ENCODE measurements at regions of chr17 and their contacts with region 1.

Region 1: DNA sequence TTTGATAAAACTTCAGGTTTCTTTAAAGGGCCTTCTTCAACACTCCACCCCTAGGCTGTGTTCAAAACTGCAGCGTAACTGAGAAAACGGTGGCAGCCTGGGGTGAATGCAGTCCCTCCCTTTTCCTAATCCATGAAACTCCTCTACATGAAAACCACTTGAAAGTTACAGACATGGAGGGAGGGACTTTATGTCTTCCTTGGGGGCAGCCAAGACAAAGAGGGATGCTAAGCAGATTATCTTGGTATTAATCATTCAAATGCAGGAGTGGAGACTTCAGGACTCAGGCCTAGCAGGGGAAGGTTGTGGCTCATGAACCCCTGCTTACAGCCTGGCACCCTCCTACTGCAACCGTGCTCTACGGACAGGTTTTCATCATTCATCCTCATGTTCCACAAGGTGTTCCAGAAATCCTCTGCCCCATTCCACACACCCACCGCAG is 46.8 kb downstream of the RNF112 start:
- DNase-seq: no peak
- ATAC-seq: no peak
- H3K4me3 ChIP-seq: no peak overlapping the region
- H3K27ac ChIP-seq: no peak overlapping the region
- H3K4me1 ChIP-seq: no peaks in the 10 kb centered on the region
- H3K27me3 ChIP-seq: no peaks in the 10 kb centered on the region
- CTCF ChIP-seq: no peak
- POLR2A ChIP-seq: no peak

Region 2: DNA sequence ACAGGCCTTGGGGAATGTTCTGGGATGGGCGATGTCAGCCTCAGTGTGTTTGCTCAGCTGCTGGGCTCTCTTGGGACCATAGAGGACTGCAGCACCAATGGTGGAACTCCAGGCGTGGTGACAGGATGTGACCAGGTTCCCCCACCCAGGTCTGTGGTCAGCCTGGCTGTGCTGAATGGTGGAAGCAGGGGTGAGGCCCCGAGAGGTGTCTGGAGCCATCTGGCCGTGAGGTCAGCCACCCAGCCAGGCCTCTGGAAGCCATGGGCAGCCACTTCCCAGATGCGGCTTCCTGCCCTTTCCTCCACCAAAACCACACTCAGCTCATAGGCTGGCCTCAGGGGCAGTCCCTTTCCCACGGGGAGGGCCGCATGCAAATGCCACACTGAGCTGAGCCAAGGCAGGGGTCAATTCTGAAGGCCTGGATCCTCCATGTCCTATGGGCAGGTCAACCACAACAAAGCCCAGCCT is 87.3 kb before region 1 on chr17:
- intact Hi-C with region 1: loop called (anchors 5 to 10 kb)
- DNase-seq: peak in 1 of 3 donors; percentile 44
- ATAC-seq: peak; percentile 27 to 72 (median 49)
- H3K4me3 ChIP-seq: no peak overlapping the region
- H3K27ac ChIP-seq: no peak overlapping the region
- H3K4me1 ChIP-seq: no peaks in the 10 kb centered on the region
- H3K27me3 ChIP-seq: no peaks in the 10 kb centered on the region
- CTCF ChIP-seq: no peak
- POLR2A ChIP-seq: no peak

Region 3: GRCh38 chr17:19614900-19615299 is 157.0 kb after region 1 on chr17:
- intact Hi-C with region 1: no loop called
- DNase-seq: no peak
- ATAC-seq: no peak
- H3K4me3 ChIP-seq: no peak overlapping the region
- H3K27ac ChIP-seq: no peak overlapping the region
- H3K4me1 ChIP-seq: no peaks in the 10 kb centered on the region
- H3K27me3 ChIP-seq: no peaks in the 10 kb centered on the region
- CTCF ChIP-seq: no peak
- POLR2A ChIP-seq: no peak

Measured in right lobe of liver (tissue), 6 donors.